Right ventricle myocardium superior (tissue), 1 donor: ENCODE measurements at regions of chr12 and their contacts with region 1.

Region 1: DNA sequence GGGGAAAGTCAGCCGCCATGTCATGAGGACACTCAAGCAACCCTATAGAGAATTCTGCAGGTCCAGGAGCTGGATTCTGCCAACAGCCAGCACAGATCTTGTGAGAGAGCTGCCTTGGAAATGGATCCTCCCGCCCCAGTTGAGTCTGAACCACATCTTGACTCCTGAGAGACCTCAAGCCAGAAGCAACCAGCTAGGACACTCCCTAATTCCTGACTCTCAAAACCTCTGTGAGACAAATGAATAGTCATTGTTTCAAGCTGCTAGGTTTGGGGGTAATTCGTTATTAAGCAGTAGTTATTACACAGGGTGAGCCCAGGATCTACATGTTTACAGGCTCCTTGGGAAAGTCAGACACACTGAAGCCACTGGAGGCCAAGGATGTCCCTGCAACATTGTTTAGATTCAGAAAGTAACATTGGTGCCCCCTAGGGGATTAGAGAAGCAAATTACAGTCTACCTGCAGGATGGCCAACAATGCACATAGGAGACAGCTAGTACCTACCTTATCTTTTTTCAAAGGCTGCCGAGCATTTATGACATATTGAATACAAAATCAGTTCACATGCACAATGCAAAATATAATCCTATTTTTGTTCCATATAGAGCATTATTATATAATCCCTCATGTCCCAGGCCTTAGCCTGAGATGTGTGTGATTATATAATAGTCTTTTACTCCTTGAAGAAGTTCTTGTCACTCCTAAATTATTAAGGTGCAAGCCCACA is 57.9 kb upstream of the FICD start:
- DNase-seq: no peak
- ATAC-seq: peak; percentile 87

Region 2: DNA sequence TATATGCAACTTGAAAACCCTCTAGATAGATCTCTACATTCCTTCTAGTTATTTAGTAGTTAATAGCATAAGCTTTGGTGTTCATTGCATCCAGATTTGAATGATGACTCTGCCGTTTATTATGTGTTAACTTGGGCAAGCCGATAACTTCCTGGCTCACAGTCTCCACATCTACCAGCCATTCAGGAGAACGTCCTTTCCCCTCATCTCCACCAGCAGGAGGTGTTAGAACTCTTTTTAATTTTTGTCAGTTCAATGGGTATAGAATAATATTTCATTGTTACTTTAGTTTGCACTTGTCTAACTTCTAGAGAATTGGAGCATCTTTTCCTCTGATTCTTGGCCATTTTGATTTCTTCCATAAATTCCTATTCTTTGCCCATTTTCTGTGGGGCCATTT is 358.1 kb before region 1 on chr12:
- intact Hi-C with region 1: loop called (anchors 10 kb)
- DNase-seq: no peak
- ATAC-seq: no peak

Region 3: DNA sequence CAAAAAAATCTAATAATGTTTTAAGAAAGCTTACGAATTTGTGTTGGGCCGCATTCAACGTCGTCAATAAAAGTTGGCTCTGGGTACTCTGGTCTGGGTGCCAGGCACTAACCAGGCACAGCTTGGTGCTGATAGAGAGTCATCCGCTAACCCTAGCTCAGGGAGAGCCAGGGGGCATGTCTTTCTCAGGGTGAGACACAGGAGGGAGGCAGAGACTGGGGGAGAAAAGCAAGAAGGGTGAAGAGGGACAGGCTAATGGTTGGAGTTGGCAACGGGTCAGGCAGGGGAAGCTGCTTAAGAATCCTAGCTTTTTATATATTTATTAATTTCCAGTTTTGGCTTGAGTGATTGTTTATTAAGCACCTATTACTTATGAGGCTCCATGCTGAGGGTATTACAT is 223.0 kb before region 1 on chr12:
- intact Hi-C with region 1: loop called (anchors 10 kb)
- DNase-seq: no peak
- ATAC-seq: peak; percentile 67